B cell (primary cell): ENCODE measurements at regions of chr18 and their contacts with region 1.

Region 1: GRCh38 chr18:3245853-3246634 is 1.6 kb upstream of the MYL12A start:
- DNase-seq: peak; percentile 86
- ATAC-seq: peak; percentile 55
- H3K4me3 ChIP-seq: peak overlapping the region; percentile 91 to 99 (median 96)
- H3K4me3 Mint-ChIP-seq: peak overlapping the region; percentile 91
- H3K27ac ChIP-seq: peak overlapping the region; percentile 89 to 94
- H3K27ac Mint-ChIP-seq: peak overlapping the region; percentile 97
- H3K4me1 ChIP-seq: peaks cover 28 to 37% of the 10 kb centered on the region in 2 donors
- H3K4me1 Mint-ChIP-seq: peaks cover 37% of the 10 kb centered on the region
- H3K27me3 ChIP-seq: no peaks in the 10 kb centered on the region
- H3K27me3 Mint-ChIP-seq: no peaks in the 10 kb centered on the region
- CTCF ChIP-seq: peak; percentile 86

Region 2: GRCh38 chr18:2846636-2847364 is 399.2 kb before region 1 on chr18 and contains the start of gene EMILIN2:
- CTCF ChIA-PET with region 1: no interaction called
- POLR2A ChIA-PET with region 1: no interaction called
- intact Hi-C with region 1: loop called (anchors 1 kb)
- DNase-seq: peak; percentile 93
- ATAC-seq: peak; percentile 82
- H3K4me3 ChIP-seq: peak within 1 kb of the TSS; percentile 54 to 76 (median 61)
- H3K4me3 Mint-ChIP-seq: peak within 1 kb of the TSS; percentile 99
- H3K27ac ChIP-seq: peak within 1 kb of the TSS; percentile 56 to 65
- H3K27ac Mint-ChIP-seq: peak within 1 kb of the TSS; percentile 91
- H3K4me1 ChIP-seq: peaks cover 14 to 37% of the 10 kb centered on the region in 2 donors
- H3K4me1 Mint-ChIP-seq: peaks cover 40% of the 10 kb centered on the region
- H3K27me3 ChIP-seq: peaks cover 0 to 41% (median 21%) of the 10 kb centered on the region in 4 experiments
- H3K27me3 Mint-ChIP-seq: peaks cover 18% of the 10 kb centered on the region
- CTCF ChIP-seq: peak; percentile 39
- total RNA-seq, gene EMILIN2: 48.2 and 52.7 TPM in 2 replicates

Region 3: GRCh38 chr18:2958819-2959298 is 287.2 kb before region 1 on chr18:
- CTCF ChIA-PET with region 1: interaction called, 9 read pairs
- POLR2A ChIA-PET with region 1: interaction called, 4 read pairs
- intact Hi-C with region 1: loop called (anchors 1 kb)
- DNase-seq: peak; percentile 30
- ATAC-seq: peak; percentile 15
- H3K4me3 ChIP-seq: peak overlapping the region in 1 of 5 experiments; percentile 42
- H3K4me3 Mint-ChIP-seq: peak overlapping the region; percentile 50
- H3K27ac ChIP-seq: peak overlapping the region; percentile 82 to 84
- H3K27ac Mint-ChIP-seq: peak overlapping the region; percentile 91
- H3K4me1 ChIP-seq: peaks cover 70 to 75% of the 10 kb centered on the region in 2 donors
- H3K4me1 Mint-ChIP-seq: peaks cover 74% of the 10 kb centered on the region
- H3K27me3 ChIP-seq: no peaks in the 10 kb centered on the region
- H3K27me3 Mint-ChIP-seq: no peaks in the 10 kb centered on the region
- CTCF ChIP-seq: no peak

Region 4: GRCh38 chr18:3012964-3013804 is 232.9 kb before region 1 on chr18 and contains the start of gene LPIN2:
- CTCF ChIA-PET with region 1: interaction called, 6 read pairs
- POLR2A ChIA-PET with region 1: interaction called, 3 read pairs
- intact Hi-C with region 1: loop called (anchors 1 kb)
- DNase-seq: peak; percentile 96
- ATAC-seq: peak; percentile 83
- H3K4me3 ChIP-seq: peak within 1 kb of the TSS; percentile 43 to 75 (median 73)
- H3K4me3 Mint-ChIP-seq: peak within 1 kb of the TSS; percentile 93
- H3K27ac ChIP-seq: peak within 1 kb of the TSS; percentile 74 to 82
- H3K27ac Mint-ChIP-seq: peak within 1 kb of the TSS; percentile 89
- H3K4me1 ChIP-seq: peaks cover 51 to 54% of the 10 kb centered on the region in 2 donors
- H3K4me1 Mint-ChIP-seq: peaks cover 55% of the 10 kb centered on the region
- H3K27me3 ChIP-seq: no peaks in the 10 kb centered on the region
- H3K27me3 Mint-ChIP-seq: no peaks in the 10 kb centered on the region
- CTCF ChIP-seq: no peak
- total RNA-seq, gene LPIN2: 31.0 and 32.9 TPM in 2 replicates

Region 5: DNA sequence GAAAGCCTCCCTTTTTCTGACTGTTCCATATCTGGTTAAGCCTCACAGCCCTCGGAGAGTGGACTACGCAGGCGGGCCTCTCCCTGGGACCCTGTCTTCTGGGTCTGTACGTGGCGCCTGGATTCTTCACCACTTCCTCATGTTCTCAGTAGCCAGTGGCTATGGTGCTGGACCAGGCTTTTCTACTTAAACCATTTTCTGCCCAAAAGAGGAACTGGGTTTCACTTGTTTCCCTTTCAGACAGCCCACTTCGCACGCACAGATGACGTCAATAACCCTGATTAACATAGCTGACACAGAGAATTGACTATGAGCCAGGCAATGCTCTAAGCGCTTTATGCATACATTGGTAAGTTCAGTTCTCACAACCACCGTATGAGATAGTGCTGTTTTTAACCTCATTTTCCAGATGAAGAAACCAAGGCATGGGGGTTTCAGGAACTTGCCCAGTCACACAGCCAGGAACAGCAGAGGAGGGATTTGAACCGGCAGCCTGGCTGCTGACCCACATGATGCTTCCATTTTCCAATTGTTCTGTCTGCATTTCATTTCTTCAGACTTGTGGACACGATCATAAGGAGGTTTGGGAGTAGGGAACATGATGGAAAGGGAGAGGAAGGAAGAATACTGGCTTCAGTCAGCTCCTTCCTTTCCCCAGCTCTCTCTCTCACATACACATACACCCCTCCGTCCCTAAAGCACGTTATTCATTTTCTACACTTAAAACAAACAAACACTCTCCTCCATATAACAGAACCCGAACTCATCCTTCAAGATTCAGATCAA is 67.9 kb before region 1 on chr18:
- CTCF ChIA-PET with region 1: interaction called, 79 read pairs
- POLR2A ChIA-PET with region 1: interaction called, 14 read pairs
- intact Hi-C with region 1: loop called (anchors 1 kb)
- DNase-seq: peak; percentile 95
- ATAC-seq: peak; percentile 84
- H3K4me3 ChIP-seq: peak overlapping the region in 3 of 5 experiments; percentile 37 to 59 (median 44)
- H3K4me3 Mint-ChIP-seq: peak overlapping the region; percentile 77
- H3K27ac ChIP-seq: peak overlapping the region; percentile 53 to 78
- H3K27ac Mint-ChIP-seq: peak overlapping the region; percentile 97
- H3K4me1 ChIP-seq: peaks cover 20 to 27% of the 10 kb centered on the region in 2 donors
- H3K4me1 Mint-ChIP-seq: peaks cover 28% of the 10 kb centered on the region
- H3K27me3 ChIP-seq: no peaks in the 10 kb centered on the region
- H3K27me3 Mint-ChIP-seq: no peaks in the 10 kb centered on the region
- CTCF ChIP-seq: no peak

Region 6: DNA sequence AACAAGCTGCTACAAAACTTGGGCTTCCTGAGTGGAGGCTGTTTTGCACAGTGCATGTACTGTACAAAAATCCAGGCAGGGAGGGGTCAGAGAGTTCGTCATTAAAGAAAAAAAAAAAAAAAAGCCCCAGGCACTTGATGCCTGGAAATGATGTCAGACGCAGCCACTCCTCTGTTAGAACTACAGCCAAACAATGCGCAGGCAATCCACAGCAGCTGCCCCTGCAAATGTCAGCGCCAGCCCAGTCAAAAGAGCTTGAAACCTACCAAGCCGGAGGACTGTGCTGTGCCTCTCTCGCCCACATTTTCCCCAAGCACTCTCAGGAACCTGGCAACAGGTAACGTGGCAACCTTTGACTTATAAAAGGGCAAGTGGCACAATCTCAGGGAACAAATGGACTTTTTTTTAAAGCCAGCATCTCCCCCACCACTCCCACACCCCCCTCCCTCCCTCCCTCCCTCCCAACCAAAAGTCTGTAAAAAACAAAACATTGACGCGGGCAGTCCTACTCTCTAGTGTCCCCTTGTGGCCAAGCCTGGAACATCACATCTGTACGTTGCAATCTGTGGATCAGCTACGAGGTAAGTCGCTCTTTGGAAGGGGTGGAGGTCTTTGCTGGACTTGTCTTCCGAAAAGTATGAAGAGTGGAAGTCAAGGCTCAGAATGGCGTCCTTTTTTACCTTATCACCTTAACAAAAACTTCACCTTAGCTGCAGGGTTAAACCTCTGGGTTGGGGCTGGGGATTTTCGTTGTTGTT is 348.0 kb after region 1 on chr18:
- CTCF ChIA-PET with region 1: interaction called, 3 read pairs
- POLR2A ChIA-PET with region 1: interaction called, 10 read pairs
- intact Hi-C with region 1: loop called (anchors 2 kb)
- DNase-seq: peak; percentile 96
- ATAC-seq: peak; percentile 80
- H3K4me3 ChIP-seq: peak overlapping the region; percentile 43 to 80 (median 64)
- H3K4me3 Mint-ChIP-seq: peak overlapping the region; percentile 91
- H3K27ac ChIP-seq: peak overlapping the region; percentile 88 to 96
- H3K27ac Mint-ChIP-seq: peak overlapping the region; percentile 98
- H3K4me1 ChIP-seq: peaks cover 43 to 49% of the 10 kb centered on the region in 2 donors
- H3K4me1 Mint-ChIP-seq: peaks cover 53% of the 10 kb centered on the region
- H3K27me3 ChIP-seq: no peaks in the 10 kb centered on the region
- H3K27me3 Mint-ChIP-seq: no peaks in the 10 kb centered on the region
- CTCF ChIP-seq: peak; percentile 84